ENCODE measurements at regions of chr9 and their contacts with region 1.

Region 1: GRCh38 chr9:132973713-132974112 is 4.8 kb upstream of the GFI1B start:
- DNase-seq: no peak
- ATAC-seq: no peak
- H3K4me3 ChIP-seq: no peak overlapping the region
- H3K27ac ChIP-seq: no peak overlapping the region
- H3K4me1 ChIP-seq: peaks cover 0 to 12% (median 3%) of the 10 kb centered on the region in 9 donors
- H3K27me3 ChIP-seq: peaks cover 3 to 62% (median 33%) of the 10 kb centered on the region in 7 donors
- CTCF ChIP-seq: no peak

Region 2: GRCh38 chr9:132507746-132508469 is 465.8 kb before region 1 on chr9:
- intact Hi-C with region 1: loop called in 1 of 10 experiments (anchors 5 kb)
- DNase-seq: peak; percentile 37 to 62
- ATAC-seq: peak in 6 of 8 donors; percentile 43 to 76 (median 62)
- H3K4me3 ChIP-seq: no peak overlapping the region
- H3K27ac ChIP-seq: no peak overlapping the region
- H3K4me1 ChIP-seq: peaks cover 0 to 11% (median 0%) of the 10 kb centered on the region in 9 donors
- H3K27me3 ChIP-seq: peaks cover 0 to 59% (median 31%) of the 10 kb centered on the region in 7 donors
- CTCF ChIP-seq: peak; percentile 57 to 87 (median 77)

Region 3: GRCh38 chr9:133023117-133023890 is 49.6 kb after region 1 on chr9:
- intact Hi-C with region 1: no loop called
- DNase-seq: no peak
- ATAC-seq: peak in 4 of 8 donors; percentile 16 to 53 (median 34)
- H3K4me3 ChIP-seq: no peak overlapping the region
- H3K27ac ChIP-seq: no peak overlapping the region
- H3K4me1 ChIP-seq: peaks cover 0 to 12% (median 4%) of the 10 kb centered on the region in 9 donors
- H3K27me3 ChIP-seq: peaks cover 0 to 7% (median 0%) of the 10 kb centered on the region in 7 donors
- CTCF ChIP-seq: no peak

Measured in heart right ventricle (tissue), 16 donors.